HEK293T (cell line): ENCODE measurements at regions of chr18 and their contacts with region 1.

Region 1: GRCh38 chr18:11553098-11553940 is 56.1 kb upstream of the SLC35G4 start:
- DNase-seq: peak; percentile 51

Region 2: DNA sequence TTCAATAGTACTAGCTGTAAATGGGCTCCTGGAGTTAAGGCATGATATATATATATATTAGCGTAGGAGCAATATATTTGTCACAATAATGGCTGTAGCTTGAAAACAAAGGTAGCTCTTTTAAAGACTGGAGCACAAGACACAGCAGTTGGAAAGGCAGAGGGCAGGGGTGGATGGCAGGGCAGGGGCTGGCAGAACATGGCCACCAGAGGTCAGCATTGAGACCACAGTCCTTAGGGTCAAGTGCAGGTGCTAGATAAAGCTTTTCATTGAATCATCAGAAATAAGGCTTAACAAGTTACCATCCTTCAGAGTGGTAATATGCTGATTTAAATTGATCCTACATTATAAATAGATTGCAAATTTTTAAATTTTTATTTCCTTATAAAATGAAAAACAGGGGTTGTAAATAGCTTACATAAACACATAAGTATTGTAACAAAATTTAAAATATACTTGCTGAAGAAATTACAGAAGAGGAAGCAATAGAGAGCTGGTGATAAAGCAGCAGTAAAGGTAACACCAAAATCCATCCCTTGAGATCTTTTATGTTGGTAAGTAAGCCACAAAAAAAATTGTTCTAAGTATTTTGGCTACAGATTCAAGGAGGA is 242.7 kb before region 1 on chr18:
- CTCF ChIA-PET with region 1: interaction called, 10 read pairs
- POLR2A ChIA-PET with region 1: no interaction called
- DNase-seq: peak; percentile 33